Left cardiac atrium (tissue), 4 donors: ENCODE measurements at regions of chr10 and their contacts with region 1.

Region 1: DNA sequence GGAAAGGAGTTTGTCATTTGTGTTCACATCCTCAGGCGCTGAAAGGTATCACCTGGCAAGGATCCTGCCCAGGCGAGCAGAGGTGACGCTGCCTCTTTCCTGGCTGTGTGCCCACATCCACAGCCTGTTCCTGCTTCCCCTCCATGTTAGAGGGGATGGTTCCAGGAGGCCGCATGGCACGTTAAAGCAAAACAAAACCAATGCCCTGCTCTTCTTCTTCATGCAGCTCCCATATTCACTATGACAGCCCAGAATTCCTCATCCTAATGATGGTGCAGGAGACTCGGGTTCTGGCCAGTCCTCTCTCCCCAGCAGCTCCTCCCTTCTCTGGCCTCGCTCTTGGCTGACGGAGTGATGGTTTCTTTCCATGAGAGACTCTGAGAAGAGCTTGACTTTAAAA is 678.5 kb upstream of the ANKRD30A start:
- DNase-seq: peak; percentile 82
- ATAC-seq: peak; percentile 70 to 80

Region 2: DNA sequence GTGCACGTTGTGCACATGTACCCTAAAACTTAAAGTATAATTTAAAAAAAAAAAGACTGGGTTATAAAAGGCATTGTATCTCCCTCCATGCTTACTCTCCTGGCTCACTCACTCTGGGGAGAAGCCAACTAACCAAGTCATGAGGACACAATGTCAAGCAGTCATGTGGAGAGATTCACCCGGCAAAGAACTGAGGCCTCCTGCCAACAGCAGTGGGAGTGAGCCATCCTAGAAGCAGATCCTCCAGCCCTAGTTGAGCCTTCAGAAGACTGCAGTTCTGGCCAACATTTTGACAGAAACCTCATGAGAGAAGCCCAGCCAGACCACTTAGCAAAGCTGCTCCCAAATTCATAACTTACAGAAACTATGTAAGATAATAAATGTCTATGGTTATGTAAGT is 283.1 kb before region 1 on chr10:
- intact Hi-C with region 1: loop called in 1 of 2 experiments (anchors 10 kb)
- DNase-seq: peak; percentile 21
- ATAC-seq: peak; percentile 50 to 90

Region 3: GRCh38 chr10:36349445-36350078 is 97.3 kb before region 1 on chr10:
- intact Hi-C with region 1: no loop called
- DNase-seq: no peak
- ATAC-seq: peak; percentile 63 to 96